Ovary (tissue), 10 donors: ENCODE measurements at regions of chr3 and their contacts with region 1.

Region 1: GRCh38 chr3:98901392-98902350 is at the start of gene DCBLD2:
- DNase-seq: peak; percentile 98
- H3K4me3 ChIP-seq: peak within 1 kb of the TSS; percentile 99
- H3K27ac ChIP-seq: peak within 1 kb of the TSS; percentile 57 to 97
- H3K4me1 ChIP-seq: peaks cover 1% of the 10 kb centered on the region
- H3K27me3 ChIP-seq: no peaks in the 10 kb centered on the region
- CTCF ChIP-seq: no peak
- EP300 ChIP-seq: no peak
- POLR2A ChIP-seq: peak; percentile 87
- total RNA-seq, gene DCBLD2: 22.4 to 58.7 (median 41.1) TPM

Region 2: DNA sequence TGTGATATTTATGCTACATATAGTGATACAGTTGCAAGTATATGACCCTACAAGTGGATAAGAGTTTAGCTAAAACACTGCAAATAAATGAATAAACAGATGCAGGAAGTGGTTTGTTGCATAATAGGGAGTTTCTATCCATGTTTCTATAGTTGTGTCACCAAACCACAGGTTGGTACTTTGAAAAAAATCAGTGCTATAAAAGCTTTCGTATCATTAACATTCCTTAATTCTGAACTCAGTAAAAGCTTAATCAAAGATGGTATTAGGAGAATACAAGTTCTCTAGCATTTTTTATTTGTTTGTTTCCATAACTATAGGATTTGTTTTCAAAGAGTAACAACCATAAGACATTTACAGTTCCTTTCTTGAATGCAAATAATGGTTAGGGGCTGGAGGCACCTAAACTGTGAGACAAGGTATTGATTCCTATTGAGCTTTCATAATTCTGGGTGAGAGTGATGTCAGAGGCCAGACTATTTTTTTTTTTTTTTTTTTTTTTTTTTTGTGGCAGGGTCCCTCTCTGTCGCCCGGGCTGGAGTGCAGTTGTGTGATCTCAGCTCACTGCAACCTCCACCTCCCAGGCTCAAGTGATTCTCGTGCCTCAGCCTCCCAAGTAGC is 337.9 kb before region 1 on chr3:
- intact Hi-C with region 1: no loop called
- DNase-seq: no peak
- H3K4me3 ChIP-seq: no peak overlapping the region
- H3K27ac ChIP-seq: no peak overlapping the region
- H3K4me1 ChIP-seq: no peaks in the 10 kb centered on the region
- H3K27me3 ChIP-seq: no peaks in the 10 kb centered on the region
- CTCF ChIP-seq: no peak
- EP300 ChIP-seq: no peak
- POLR2A ChIP-seq: no peak

Region 3: DNA sequence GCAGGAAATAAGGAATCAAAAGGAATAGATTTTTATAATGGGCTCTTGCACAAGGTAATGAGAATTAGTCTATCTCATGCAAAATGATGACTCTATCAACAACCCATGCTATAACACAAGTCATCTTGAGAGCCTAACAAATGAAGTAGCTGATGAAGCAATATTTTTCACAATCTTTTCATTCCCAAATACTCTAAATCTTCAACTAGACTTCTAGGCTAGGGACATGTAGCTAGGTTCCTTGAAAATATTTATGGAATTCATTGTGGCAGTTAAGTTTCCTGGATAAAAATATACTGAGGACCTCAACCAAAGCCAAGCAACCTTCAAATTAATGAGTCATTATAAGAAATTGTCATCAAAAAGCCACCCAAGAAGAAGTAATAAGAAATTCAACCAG is 55.6 kb before region 1 on chr3:
- intact Hi-C with region 1: loop called in 1 of 4 experiments (anchors 10 kb)
- DNase-seq: no peak
- H3K4me3 ChIP-seq: no peak overlapping the region
- H3K27ac ChIP-seq: no peak overlapping the region
- H3K4me1 ChIP-seq: no peaks in the 10 kb centered on the region
- H3K27me3 ChIP-seq: no peaks in the 10 kb centered on the region
- CTCF ChIP-seq: no peak
- EP300 ChIP-seq: no peak
- POLR2A ChIP-seq: no peak